ENCODE measurements at regions of chr12 and their contacts with region 1.

Region 1: GRCh38 chr12:14948672-14949071 is 10.3 kb upstream of the ERP27 start:
- DNase-seq: peak; percentile 93
- H3K4me3 ChIP-seq: peak overlapping the region in 1 of 3 experiments; percentile 36
- H3K27ac ChIP-seq: peak overlapping the region; percentile 94
- H3K4me1 ChIP-seq: peaks cover 72% of the 10 kb centered on the region
- H3K27me3 ChIP-seq: no peaks in the 10 kb centered on the region
- CTCF ChIP-seq: no peak
- POLR2A ChIP-seq: peak; percentile 82

Region 2: DNA sequence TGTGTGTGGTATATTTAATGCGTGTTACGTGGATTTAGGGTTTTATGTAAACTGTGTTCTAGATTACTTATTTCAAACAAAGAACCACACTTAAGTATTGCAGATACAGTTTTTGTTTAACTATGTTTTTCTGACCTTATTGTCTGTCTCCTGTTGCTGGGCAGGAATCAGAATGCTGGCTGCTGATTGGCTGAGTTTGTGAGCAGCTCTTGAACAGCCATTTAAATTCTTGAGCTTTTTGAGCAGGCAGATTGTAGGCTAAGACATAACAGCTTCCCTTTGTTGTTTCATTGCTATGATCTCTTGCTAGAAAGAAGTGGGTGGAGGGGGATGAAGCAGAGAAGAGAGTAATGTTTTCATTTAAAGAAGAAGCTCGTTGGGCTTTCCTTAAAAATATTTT is 531.0 kb before region 1 on chr12:
- CTCF ChIA-PET with region 1: no interaction called
- POLR2A ChIA-PET with region 1: no interaction called
- dilution Hi-C with region 1: no loop called
- intact Hi-C with region 1: no loop called
- DNase-seq: peak; percentile 96
- H3K4me3 ChIP-seq: no peak overlapping the region
- H3K27ac ChIP-seq: peak overlapping the region; percentile 54
- H3K4me1 ChIP-seq: peaks cover 45% of the 10 kb centered on the region
- H3K27me3 ChIP-seq: no peaks in the 10 kb centered on the region
- CTCF ChIP-seq: no peak
- POLR2A ChIP-seq: no peak

Region 3: DNA sequence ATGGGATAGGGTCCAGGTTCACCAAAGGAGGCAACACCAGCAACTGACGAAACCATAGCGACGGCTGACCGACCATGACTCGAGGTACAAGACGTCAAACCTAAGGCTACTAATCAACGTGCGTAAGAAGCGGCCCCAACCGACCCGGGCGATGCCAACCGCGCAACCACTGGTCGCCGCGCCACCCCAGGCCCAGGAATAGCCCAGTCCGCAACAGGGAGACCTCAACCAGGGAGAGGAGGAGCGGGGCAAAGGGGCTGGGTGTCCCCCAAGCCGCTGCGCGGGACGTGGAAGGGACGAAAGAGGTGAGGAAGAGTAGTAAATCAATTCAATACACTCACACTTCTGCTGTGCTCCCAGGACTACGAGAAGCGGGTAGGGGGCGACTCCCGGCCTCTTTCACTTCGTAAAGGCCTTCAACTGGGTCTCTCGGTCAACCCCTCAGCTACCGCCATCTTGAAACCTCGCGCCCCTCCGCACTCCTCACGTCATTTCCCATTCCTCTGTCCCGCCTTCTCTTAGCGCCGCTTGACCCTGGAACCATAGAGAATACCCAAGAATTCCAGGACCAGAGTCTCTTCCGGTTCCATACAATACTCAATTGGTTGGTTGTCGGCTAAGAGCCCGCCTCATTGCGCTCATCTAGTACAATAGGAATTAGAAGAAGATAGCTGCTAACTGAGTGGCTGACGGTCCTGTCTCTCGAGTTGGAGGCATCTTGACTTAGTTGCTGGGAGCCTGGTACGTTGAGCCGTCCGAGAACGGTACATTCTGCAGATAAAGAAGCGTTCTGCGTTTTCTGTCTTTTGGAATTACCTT is 145.5 kb before region 1 on chr12 and contains the starts of genes C12orf60 and WBP11:
- CTCF ChIA-PET with region 1: no interaction called
- POLR2A ChIA-PET with region 1: no interaction called
- dilution Hi-C with region 1: no loop called
- intact Hi-C with region 1: loop called (anchors 1 kb)
- DNase-seq: peak; percentile 99
- H3K4me3 ChIP-seq: peak within 1 kb of the TSS; percentile 82 to 98 (median 97)
- H3K27ac ChIP-seq: peak within 1 kb of the TSS; percentile 90
- H3K4me1 ChIP-seq: peaks cover 17% of the 10 kb centered on the region
- H3K27me3 ChIP-seq: no peaks in the 10 kb centered on the region
- CTCF ChIP-seq: no peak
- POLR2A ChIP-seq: peak; percentile 92
- total RNA-seq, gene C12orf60: 1.1 and 1.3 TPM in 2 replicates
- total RNA-seq, gene WBP11: 70.5 and 77.1 TPM in 2 replicates

Region 4: GRCh38 chr12:14868920-14869506 is 79.7 kb before region 1 on chr12:
- CTCF ChIA-PET with region 1: no interaction called
- POLR2A ChIA-PET with region 1: no interaction called
- dilution Hi-C with region 1: no loop called
- intact Hi-C with region 1: no loop called
- DNase-seq: no peak
- H3K4me3 ChIP-seq: no peak overlapping the region
- H3K27ac ChIP-seq: no peak overlapping the region
- H3K4me1 ChIP-seq: no peaks in the 10 kb centered on the region
- H3K27me3 ChIP-seq: no peaks in the 10 kb centered on the region
- CTCF ChIP-seq: no peak
- POLR2A ChIP-seq: no peak

Region 5: DNA sequence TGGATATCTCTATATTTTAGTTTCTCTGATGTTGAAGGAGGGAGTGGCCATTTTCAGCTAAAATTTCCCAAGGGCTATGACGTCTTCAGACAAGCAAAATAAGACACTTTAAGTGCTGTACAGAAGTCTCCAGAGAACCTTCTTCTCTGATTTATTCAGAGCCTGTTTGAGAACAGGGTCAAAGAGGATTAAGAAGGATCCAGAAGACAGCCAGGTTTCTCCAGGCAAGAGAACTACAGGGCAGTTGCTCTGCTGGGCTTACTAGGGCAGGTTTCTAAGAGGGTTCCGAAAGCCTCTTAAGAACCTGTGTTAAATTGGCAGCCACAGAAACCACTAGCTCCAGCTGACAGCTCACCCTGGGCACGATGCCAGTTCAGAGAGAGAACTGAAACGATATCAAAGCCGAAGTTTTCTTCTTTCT is 64.2 kb before region 1 on chr12:
- CTCF ChIA-PET with region 1: no interaction called
- POLR2A ChIA-PET with region 1: interaction called, 3 read pairs
- dilution Hi-C with region 1: no loop called
- intact Hi-C with region 1: loop called (anchors 2 kb)
- DNase-seq: peak; percentile 84
- H3K4me3 ChIP-seq: peak overlapping the region; percentile 17 to 64 (median 62)
- H3K27ac ChIP-seq: peak overlapping the region; percentile 49
- H3K4me1 ChIP-seq: peaks cover 38% of the 10 kb centered on the region
- H3K27me3 ChIP-seq: no peaks in the 10 kb centered on the region
- CTCF ChIP-seq: no peak
- POLR2A ChIP-seq: no peak

Region 6: DNA sequence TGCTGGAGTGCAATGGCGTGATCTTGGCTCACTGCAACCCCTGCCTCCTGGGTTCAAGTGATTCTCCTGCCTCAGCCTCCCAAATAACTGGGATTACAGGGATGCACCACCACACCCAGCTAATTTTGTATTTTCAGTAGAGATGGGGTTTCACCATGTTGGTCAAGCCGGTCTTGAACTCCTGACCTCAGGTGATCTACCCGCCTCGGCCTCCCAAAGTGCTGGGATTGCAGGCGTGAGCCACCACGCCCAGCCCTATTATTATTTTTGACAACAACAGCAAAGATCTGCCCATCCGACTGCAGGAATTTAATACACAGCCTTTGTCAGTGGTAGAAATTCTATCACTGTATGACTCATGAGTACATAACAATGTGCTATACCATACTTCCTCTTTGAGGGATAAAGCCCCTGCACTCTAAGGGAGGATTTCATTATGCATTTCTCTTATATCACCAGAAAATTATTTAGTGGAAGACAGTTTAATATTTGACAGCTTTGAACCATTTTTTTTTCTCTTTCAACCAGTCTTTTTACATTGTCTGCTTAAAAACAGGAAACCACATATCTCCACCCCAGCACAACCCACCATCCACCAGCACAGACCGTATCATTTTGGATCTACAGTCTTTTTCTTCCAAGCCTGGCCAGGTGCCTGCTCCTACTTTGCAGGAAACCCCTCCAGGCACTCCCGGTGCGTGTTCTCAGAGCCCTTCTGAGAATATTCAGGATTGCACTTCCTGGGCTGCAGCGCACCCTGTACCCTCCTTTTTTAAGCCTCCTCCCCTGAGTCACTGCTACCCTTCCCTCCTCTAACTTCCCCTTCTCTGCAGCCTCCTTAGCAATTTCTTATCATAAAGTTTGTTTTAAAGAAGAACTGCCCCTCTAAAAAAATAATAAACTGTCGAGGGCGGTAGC is 12.1 kb after region 1 on chr12:
- CTCF ChIA-PET with region 1: interaction called, 6 read pairs
- POLR2A ChIA-PET with region 1: interaction called, 3 read pairs
- dilution Hi-C with region 1: no loop called
- intact Hi-C with region 1: loop called (anchors 1 kb)
- DNase-seq: peak; percentile 83
- H3K4me3 ChIP-seq: peak overlapping the region; percentile 57 to 78 (median 64)
- H3K27ac ChIP-seq: peak overlapping the region; percentile 80
- H3K4me1 ChIP-seq: peaks cover 52% of the 10 kb centered on the region
- H3K27me3 ChIP-seq: no peaks in the 10 kb centered on the region
- CTCF ChIP-seq: no peak
- POLR2A ChIP-seq: no peak